Panc1 (cell line): ENCODE measurements at regions of chr2 and their contacts with region 1.

Region 1: GRCh38 chr2:237182422-237183123 is 96.9 kb downstream of the COPS8 start:
- DNase-seq: no peak
- ATAC-seq: no peak
- H3K4me3 ChIP-seq: no peak overlapping the region
- H3K27ac ChIP-seq: peak overlapping the region; percentile 84; the same call in 1 of the 2 replicates
- H3K4me1 ChIP-seq: peaks cover 12% of the 10 kb centered on the region
- H3K27me3 ChIP-seq: no peaks in the 10 kb centered on the region
- CTCF ChIP-seq: no peak

Region 2: DNA sequence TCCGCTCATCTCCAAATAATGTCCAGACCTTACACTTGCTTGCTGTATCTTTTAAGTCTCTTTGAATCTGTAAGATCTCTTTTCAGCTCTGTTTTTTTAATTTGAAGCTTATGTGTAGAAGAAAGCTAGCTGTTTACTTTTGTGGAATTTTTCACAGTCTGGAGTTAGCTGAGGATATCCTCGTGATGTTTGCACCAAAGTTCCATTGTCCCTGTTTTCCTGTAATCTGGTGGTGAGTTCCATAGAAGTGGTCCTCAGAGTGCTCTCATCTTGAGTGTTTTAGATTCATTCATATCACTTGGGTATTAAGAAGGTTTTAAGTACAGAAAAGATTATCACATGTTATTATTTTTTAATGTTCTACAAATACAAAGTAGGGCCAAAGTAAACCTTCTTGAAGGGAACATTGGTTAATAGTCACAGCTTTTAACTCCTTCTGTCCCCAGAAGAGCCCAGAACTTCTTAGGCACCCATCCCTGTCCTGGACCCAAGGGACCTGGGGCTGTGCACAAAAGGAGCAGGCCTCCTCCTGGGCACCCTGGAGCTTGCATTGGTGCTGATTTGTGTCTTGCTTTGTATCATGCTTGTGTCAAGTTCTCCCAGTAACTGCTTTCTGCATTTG is 319.4 kb after region 1 on chr2:
- CTCF ChIA-PET with region 1: no interaction called
- POLR2A ChIA-PET with region 1: interaction called, 10 read pairs
- in situ Hi-C with region 1: no loop called
- intact Hi-C with region 1: no loop called
- DNase-seq: no peak
- ATAC-seq: no peak
- H3K4me3 ChIP-seq: no peak overlapping the region
- H3K27ac ChIP-seq: peak overlapping the region; percentile 67
- H3K4me1 ChIP-seq: peaks cover 26% of the 10 kb centered on the region
- H3K27me3 ChIP-seq: no peaks in the 10 kb centered on the region
- CTCF ChIP-seq: no peak

Region 3: DNA sequence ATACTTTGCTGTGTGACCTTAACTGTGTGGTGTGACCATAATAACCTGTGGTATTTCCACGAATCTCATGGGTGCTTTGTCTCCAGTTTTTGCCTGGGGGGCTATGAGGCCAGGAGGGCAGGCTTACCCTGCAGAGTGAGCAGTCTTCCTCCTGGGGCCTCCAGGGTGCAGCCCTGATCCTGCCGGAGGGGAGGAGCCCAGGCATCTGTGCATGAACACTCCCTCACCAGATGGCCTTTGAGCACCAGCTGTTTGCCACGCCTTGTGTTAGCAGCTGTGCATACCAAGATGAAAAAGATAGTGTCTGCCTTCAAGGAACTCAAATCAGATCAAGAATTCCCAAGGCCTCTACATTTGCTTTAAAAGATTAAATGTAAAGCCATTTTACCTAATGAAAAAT is 541.0 kb after region 1 on chr2:
- CTCF ChIA-PET with region 1: no interaction called
- POLR2A ChIA-PET with region 1: no interaction called
- in situ Hi-C with region 1: no loop called
- intact Hi-C with region 1: no loop called
- DNase-seq: no peak
- ATAC-seq: peak; percentile 80
- H3K4me3 ChIP-seq: no peak overlapping the region
- H3K27ac ChIP-seq: 0 out of 2 replicates have a peak overlapping the region, but pooled peaks have one; percentile 18
- H3K4me1 ChIP-seq: peaks cover 32% of the 10 kb centered on the region
- H3K27me3 ChIP-seq: no peaks in the 10 kb centered on the region
- CTCF ChIP-seq: no peak